ENCODE measurements at regions of chr9 and their contacts with region 1.

Region 1: GRCh38 chr9:129981180-129981907 is 61.6 kb downstream of the FNBP1 start:
- DNase-seq: peak; percentile 38
- ATAC-seq: no peak; the same call in 2 of the 3 replicates
- H3K4me3 ChIP-seq: no peak overlapping the region
- H3K27ac ChIP-seq: no peak overlapping the region
- H3K4me1 ChIP-seq: peaks cover 9% of the 10 kb centered on the region; the same call in 1 of the 2 replicates
- H3K27me3 ChIP-seq: no peaks in the 10 kb centered on the region
- CTCF ChIP-seq: no peak
- EP300 ChIP-seq: no peak
- POLR2A ChIP-seq: no peak
- RAD21 ChIP-seq: no peak

Region 2: DNA sequence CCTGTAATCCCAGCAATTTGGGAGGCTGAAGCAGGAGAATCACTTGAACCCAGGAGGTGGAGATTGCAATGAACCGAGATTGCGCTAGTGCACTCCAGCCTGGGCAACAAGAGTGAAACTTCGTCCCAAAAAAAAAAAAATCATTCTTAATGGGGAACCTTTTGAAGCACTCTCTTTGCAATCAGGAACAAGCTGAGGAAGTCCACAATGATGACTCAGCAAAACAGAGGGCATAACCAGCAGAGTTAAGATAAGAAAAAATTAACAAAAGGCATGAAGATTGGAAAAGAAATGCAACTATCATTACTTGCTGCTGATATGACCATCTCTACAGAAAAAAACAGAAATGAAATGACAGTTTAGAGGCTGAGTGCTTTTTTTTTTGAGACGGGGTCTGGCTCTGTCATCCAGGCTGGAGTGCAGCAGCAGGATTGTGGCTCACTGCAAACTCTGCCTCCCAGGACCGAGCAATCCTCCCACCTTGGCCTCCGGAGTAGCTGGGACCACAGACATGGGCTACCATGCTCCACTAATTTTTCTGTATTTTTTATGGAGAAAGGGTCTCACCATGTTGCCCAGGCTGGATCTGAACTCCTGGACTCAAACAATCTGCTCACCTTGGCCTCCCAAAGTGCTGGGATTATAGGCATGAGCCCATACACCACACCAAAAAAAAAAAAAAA is 26.3 kb before region 1 on chr9:
- CTCF ChIA-PET with region 1: no interaction called
- POLR2A ChIA-PET with region 1: no interaction called
- in situ Hi-C with region 1: no loop called
- intact Hi-C with region 1: loop called (anchors 1 kb)
- DNase-seq: no peak
- ATAC-seq: no peak
- H3K4me3 ChIP-seq: no peak overlapping the region
- H3K27ac ChIP-seq: no peak overlapping the region
- H3K4me1 ChIP-seq: peaks cover 7% of the 10 kb centered on the region
- H3K27me3 ChIP-seq: no peaks in the 10 kb centered on the region
- CTCF ChIP-seq: no peak
- EP300 ChIP-seq: no peak
- POLR2A ChIP-seq: no peak
- RAD21 ChIP-seq: no peak

Region 3: DNA sequence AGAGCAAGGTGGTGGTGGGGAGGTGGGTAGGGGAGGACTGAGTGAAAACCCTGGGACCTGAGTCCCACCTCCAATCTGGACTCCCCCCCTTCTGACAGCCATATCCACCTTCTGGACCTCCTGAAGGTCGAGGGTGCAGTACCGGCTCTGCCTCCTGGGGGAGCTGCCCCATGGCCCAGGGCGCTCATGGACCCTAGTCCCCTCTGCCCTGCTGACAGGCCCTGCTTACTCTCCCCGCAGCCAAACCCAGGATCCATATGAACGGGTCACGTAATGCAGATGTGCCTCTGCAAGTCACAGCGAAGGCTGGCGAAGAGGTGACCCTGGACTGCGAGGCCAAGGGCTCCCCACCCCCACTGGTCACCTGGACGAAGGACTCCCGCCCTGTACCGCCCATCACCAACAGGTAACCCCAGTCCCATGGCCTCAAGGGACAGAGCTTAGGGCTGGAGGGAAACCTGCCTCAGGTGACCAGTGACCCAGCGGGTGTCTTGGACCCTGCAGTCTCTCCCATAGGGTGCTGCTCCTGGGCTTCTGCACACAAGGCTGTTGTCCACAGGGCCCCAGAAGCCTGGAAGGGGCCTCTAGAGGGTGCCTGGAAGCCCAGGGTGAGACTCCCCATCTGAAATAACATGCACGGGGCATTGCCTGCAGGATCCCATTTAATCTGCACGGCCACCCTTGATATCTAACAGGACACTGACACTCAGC is 345.9 kb after region 1 on chr9:
- CTCF ChIA-PET with region 1: no interaction called
- POLR2A ChIA-PET with region 1: no interaction called
- in situ Hi-C with region 1: no loop called
- intact Hi-C with region 1: no loop called
- DNase-seq: no peak
- ATAC-seq: peak; percentile 77
- H3K4me3 ChIP-seq: no peak overlapping the region
- H3K27ac ChIP-seq: no peak overlapping the region
- H3K4me1 ChIP-seq: peaks cover 12% of the 10 kb centered on the region
- H3K27me3 ChIP-seq: peaks cover 10 to 35% of the 10 kb centered on the region in 2 experiments; a peak in 4 of 5 replicates
- CTCF ChIP-seq: peak; percentile 57
- EP300 ChIP-seq: no peak
- POLR2A ChIP-seq: no peak
- RAD21 ChIP-seq: no peak

Measured in HepG2 (cell line).